A673 (cell line): ENCODE measurements at regions of chr1 and their contacts with region 1.

Region 1: GRCh38 chr1:160607011-160607671 is 27.8 kb upstream of the CD84 start:
- DNase-seq: peak; percentile 88
- H3K4me3 ChIP-seq: no peak overlapping the region
- H3K27ac ChIP-seq: no peak overlapping the region
- H3K4me1 ChIP-seq: peaks cover 15% of the 10 kb centered on the region
- H3K27me3 ChIP-seq: no peaks in the 10 kb centered on the region
- CTCF ChIP-seq: peak; percentile 79

Region 2: DNA sequence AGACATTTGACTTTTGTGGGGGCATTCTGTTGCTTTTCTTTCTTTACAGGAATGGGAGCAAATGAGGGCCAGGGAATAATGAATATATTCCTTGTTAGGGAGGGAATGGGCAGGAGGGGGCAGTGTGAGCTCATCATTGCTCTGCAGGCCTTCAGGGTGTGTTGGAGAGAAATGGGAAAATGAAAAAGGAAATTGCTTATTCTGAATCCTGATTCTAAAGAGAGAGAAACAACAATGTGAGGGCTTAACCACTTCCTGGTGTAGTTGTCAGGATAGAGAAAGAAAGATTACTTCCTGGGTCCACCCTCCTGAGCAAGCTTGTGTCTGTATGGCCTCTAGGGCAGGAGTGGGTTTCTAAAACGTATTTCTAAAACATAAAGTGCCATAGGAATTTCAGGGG is 178.5 kb before region 1 on chr1:
- CTCF ChIA-PET with region 1: interaction called, 6 read pairs
- POLR2A ChIA-PET with region 1: no interaction called
- intact Hi-C with region 1: loop called (anchors 1 kb)
- DNase-seq: peak; percentile 68
- H3K4me3 ChIP-seq: no peak overlapping the region
- H3K27ac ChIP-seq: no peak overlapping the region
- H3K4me1 ChIP-seq: no peaks in the 10 kb centered on the region
- H3K27me3 ChIP-seq: no peaks in the 10 kb centered on the region
- CTCF ChIP-seq: peak; percentile 69

Region 3: DNA sequence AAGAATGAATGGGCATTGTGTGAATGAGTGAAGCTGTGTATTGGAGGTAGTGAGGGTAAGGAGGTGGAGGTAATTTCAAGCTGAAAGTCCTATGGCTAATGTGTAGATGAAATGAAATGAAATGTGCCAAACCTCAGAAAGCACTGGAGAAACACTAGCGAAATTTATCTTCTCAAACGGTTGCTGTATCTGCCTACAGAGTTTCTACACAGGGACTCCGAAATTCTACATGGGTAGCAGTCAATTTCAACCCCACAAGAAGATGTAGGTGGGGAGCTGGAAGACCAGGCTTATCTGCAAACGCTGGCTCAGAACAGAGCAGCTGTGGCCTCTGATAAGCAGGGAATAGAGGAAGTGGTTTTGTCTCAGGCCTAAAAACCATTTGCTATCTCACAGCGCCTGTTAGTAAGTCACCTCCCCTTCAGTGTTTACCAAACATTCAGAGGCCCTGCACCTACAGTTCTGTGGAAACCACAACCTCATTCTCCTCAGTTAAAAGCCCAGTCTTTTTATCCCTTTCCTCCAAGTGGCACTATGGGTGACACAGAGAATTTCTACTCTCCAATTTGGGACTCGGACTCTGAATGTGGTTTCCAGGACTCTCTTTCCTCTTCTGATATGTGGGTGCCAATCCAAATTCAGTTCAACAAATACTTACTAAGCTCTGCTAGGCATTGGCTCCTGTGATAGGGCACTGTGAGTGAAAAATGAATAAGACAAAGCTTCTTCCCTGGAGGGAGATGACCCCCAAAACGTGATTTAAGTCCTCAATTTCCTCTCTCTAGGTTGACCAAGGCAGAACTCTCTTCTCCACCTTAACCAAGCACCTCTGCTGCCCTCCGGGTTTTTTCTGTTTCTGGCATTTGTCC is 66.9 kb before region 1 on chr1:
- CTCF ChIA-PET with region 1: no interaction called
- POLR2A ChIA-PET with region 1: no interaction called
- intact Hi-C with region 1: loop called (anchors 2 kb)
- DNase-seq: no peak
- H3K4me3 ChIP-seq: no peak overlapping the region
- H3K27ac ChIP-seq: no peak overlapping the region
- H3K4me1 ChIP-seq: no peaks in the 10 kb centered on the region
- H3K27me3 ChIP-seq: no peaks in the 10 kb centered on the region
- CTCF ChIP-seq: no peak

Region 4: GRCh38 chr1:160646711-160647328 is 39.7 kb after region 1 on chr1 and contains the start of gene SLAMF1:
- CTCF ChIA-PET with region 1: interaction called, 3 read pairs
- POLR2A ChIA-PET with region 1: no interaction called
- intact Hi-C with region 1: loop called (anchors 1 kb)
- DNase-seq: peak; percentile 98
- H3K4me3 ChIP-seq: peak within 1 kb of the TSS; percentile 5
- H3K27ac ChIP-seq: peak within 1 kb of the TSS; percentile 64
- H3K4me1 ChIP-seq: peaks cover 31% of the 10 kb centered on the region
- H3K27me3 ChIP-seq: no peaks in the 10 kb centered on the region
- CTCF ChIP-seq: no peak
- total RNA-seq, gene SLAMF1: 1.1 and 2.2 TPM in 2 replicates

Region 5: GRCh38 chr1:160675641-160676410 is 68.7 kb after region 1 on chr1:
- CTCF ChIA-PET with region 1: interaction called, 4 read pairs
- POLR2A ChIA-PET with region 1: no interaction called
- intact Hi-C with region 1: loop called (anchors 5 kb)
- DNase-seq: peak; percentile 70
- H3K4me3 ChIP-seq: no peak overlapping the region
- H3K27ac ChIP-seq: no peak overlapping the region
- H3K4me1 ChIP-seq: no peaks in the 10 kb centered on the region
- H3K27me3 ChIP-seq: peaks cover 12% of the 10 kb centered on the region
- CTCF ChIP-seq: peak; percentile 93

Region 6: DNA sequence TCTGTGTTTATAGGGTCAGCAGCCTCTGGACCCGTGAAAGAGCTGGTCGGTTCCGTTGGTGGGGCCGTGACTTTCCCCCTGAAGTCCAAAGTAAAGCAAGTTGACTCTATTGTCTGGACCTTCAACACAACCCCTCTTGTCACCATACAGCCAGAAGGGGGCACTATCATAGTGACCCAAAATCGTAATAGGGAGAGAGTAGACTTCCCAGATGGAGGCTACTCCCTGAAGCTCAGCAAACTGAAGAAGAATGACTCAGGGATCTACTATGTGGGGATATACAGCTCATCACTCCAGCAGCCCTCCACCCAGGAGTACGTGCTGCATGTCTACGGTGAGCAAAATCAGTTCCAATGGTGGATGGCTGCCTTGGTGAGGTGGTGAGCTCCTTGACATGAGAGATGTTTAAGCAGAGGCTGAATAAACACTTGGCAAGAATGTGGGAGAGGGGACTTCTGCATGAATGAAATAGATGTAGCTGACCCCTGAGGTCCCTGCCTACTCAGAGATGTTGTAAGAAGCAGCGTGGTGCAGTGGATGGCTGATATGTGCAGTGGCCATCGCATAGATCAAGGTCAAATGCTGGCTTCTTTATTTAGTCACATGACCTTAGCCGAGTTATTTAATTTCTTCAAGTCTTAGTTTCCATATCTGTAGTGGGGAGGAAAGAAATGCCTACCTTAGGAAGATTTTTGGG is 141.2 kb after region 1 on chr1:
- CTCF ChIA-PET with region 1: no interaction called
- POLR2A ChIA-PET with region 1: no interaction called
- intact Hi-C with region 1: no loop called
- DNase-seq: peak; percentile 45
- H3K4me3 ChIP-seq: no peak overlapping the region
- H3K27ac ChIP-seq: no peak overlapping the region
- H3K4me1 ChIP-seq: no peaks in the 10 kb centered on the region
- H3K27me3 ChIP-seq: peaks cover 35% of the 10 kb centered on the region
- CTCF ChIP-seq: peak; percentile 46